Body of pancreas (tissue), 4 donors: ENCODE measurements at regions of chr3 and their contacts with region 1.

Region 1: DNA sequence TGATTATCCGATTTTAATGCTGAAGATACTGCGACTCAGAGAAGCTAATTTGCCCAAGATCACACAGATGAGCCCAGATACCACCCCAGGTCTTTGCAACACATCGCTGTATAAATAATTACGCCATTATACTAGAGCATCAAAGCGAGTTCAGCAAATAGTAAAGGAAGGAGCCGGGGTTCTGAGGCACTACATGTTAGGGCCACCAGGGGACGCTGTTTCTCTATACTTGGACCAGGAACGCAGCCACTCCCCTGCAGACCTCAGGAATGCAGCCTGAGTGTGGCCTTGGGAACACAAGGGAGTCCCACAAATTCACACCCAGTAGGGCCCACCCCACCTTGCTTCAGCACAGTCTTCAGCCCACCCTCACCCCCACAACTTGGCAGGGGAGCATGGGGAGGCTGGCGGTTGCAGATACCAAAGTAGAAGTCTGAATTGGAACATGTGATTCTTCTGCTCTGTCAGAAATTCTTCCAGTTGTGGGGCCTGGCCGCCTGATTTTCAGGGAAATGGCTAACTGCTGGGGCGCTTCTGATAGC is 57.8 kb upstream of the RYK start:
- DNase-seq: peak; percentile 82 to 88 (median 85)
- ATAC-seq: peak; percentile 54
- H3K4me3 ChIP-seq: no peak overlapping the region
- H3K27ac ChIP-seq: peak overlapping the region; percentile 56 to 73 (median 65)
- H3K4me1 ChIP-seq: peaks cover 40% of the 10 kb centered on the region
- H3K27me3 ChIP-seq: no peaks in the 10 kb centered on the region
- CTCF ChIP-seq: peak; percentile 96 to 99 (median 99)
- POLR2A ChIP-seq: no peak

Region 2: GRCh38 chr3:133691410-133692107 is 616.9 kb before region 1 on chr3:
- intact Hi-C with region 1: no loop called
- DNase-seq: no peak
- ATAC-seq: no peak
- H3K4me3 ChIP-seq: no peak overlapping the region
- H3K27ac ChIP-seq: no peak overlapping the region
- H3K4me1 ChIP-seq: no peaks in the 10 kb centered on the region
- H3K27me3 ChIP-seq: no peaks in the 10 kb centered on the region
- CTCF ChIP-seq: no peak
- POLR2A ChIP-seq: no peak

Region 3: DNA sequence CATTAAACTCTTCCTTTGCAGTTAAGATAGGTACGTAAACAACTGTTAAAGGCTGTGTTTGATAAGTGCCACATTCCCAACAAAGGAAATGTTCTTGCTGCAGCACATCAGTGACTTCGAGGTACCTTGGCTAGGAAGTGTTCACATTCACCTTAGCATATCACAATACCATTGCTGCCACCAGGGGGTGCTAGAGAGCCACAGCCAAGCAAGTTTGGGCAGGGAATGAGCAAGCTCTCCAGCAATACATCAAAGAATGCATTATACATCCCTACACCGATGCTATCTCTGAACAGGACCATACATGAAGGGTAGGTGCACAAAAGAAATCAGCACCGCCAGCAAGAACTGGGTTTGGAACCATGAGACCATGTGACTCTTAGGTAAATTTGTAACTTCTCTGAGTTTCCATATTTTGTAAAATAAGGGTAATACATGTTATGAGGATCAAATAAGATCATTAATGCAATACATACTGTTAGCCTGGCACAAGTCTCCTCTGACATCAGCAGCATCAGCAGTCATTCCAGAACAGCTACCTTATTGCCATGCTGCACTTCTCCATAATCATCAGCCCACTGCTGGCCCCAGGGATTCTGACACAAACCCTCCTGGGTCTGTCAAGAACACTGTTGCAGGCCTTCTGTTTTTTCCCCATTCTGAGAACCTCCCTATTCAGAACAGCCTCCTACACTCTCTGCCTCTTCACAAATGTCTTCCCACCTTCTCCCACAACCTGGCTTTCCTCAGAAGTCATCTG is 95.3 kb before region 1 on chr3:
- intact Hi-C with region 1: loop called (anchors 10 kb)
- DNase-seq: peak; percentile 80 to 90 (median 84)
- ATAC-seq: peak; percentile 84
- H3K4me3 ChIP-seq: no peak overlapping the region
- H3K27ac ChIP-seq: no peak overlapping the region
- H3K4me1 ChIP-seq: no peaks in the 10 kb centered on the region
- H3K27me3 ChIP-seq: no peaks in the 10 kb centered on the region
- CTCF ChIP-seq: peak; percentile 82 to 96 (median 87)
- POLR2A ChIP-seq: no peak

Region 4: DNA sequence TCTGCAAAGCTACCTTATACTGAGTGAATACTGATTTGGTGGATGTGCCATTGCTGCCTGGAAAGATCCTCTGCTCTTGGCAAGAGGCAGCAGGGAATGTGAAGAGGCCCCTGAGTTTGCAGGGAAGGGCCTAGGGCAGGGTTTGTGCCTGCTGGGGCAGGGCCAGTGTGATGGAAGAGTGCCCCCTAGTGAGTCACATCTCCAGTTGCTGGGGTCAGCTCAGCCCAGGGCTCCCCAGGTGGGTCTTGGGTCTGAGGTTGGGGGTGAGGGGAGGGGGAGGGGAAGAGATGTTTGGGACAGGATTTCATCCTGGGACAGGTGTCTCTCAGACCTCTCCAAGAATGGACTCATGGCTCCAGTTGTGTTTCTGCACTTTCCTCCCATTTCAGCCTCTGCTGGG is 70.0 kb after region 1 on chr3:
- intact Hi-C with region 1: loop called (anchors 5 kb)
- DNase-seq: peak; percentile 51 to 69 (median 55)
- ATAC-seq: no peak
- H3K4me3 ChIP-seq: no peak overlapping the region
- H3K27ac ChIP-seq: no peak overlapping the region
- H3K4me1 ChIP-seq: peaks cover 37% of the 10 kb centered on the region
- H3K27me3 ChIP-seq: no peaks in the 10 kb centered on the region
- CTCF ChIP-seq: peak; percentile 43 to 69 (median 59)
- POLR2A ChIP-seq: no peak

Region 5: GRCh38 chr3:134473868-134474546 is 165.6 kb after region 1 on chr3:
- intact Hi-C with region 1: loop called (anchors 5 kb)
- DNase-seq: peak; percentile 78 to 83 (median 82)
- ATAC-seq: peak; percentile 81
- H3K4me3 ChIP-seq: no peak overlapping the region
- H3K27ac ChIP-seq: peak overlapping the region in 2 of 4 donors; percentile 34 to 45
- H3K4me1 ChIP-seq: peaks cover 20% of the 10 kb centered on the region
- H3K27me3 ChIP-seq: no peaks in the 10 kb centered on the region
- CTCF ChIP-seq: peak; percentile 42 to 90 (median 80)
- POLR2A ChIP-seq: no peak